ENCODE measurements at regions of chr5 and their contacts with region 1.

Region 1: GRCh38 chr5:172370648-172371545 is 83.4 kb downstream of the SH3PXD2B start:
- DNase-seq: peak in 1 of 2 experiments; percentile 76
- H3K4me3 ChIP-seq: no peak overlapping the region
- H3K27ac ChIP-seq: no peak overlapping the region
- H3K4me1 ChIP-seq: no peaks in the 10 kb centered on the region
- H3K27me3 ChIP-seq: no peaks in the 10 kb centered on the region
- CTCF ChIP-seq: peak in 2 of 3 experiments; percentile 51 to 69; a peak in 3 of 4 replicates
- EP300 ChIP-seq: no peak
- POLR2A ChIP-seq: no peak
- RAD21 ChIP-seq: peak; percentile 47 to 54

Region 2: GRCh38 chr5:172274921-172275753 is 95.8 kb before region 1 on chr5:
- CTCF ChIA-PET with region 1: no interaction called
- POLR2A ChIA-PET with region 1: no interaction called
- DNase-seq: peak in 1 of 2 experiments; percentile 37
- H3K4me3 ChIP-seq: no peak overlapping the region
- H3K27ac ChIP-seq: no peak overlapping the region
- H3K4me1 ChIP-seq: peaks cover 0 to 3% (median 0%) of the 10 kb centered on the region in 4 experiments; a peak in 2 of 7 replicates
- H3K27me3 ChIP-seq: no peaks in the 10 kb centered on the region
- CTCF ChIP-seq: no peak
- EP300 ChIP-seq: no peak
- POLR2A ChIP-seq: no peak
- RAD21 ChIP-seq: no peak

Region 3: GRCh38 chr5:172334196-172334595 is 36.7 kb before region 1 on chr5:
- CTCF ChIA-PET with region 1: interaction called, 19 read pairs
- POLR2A ChIA-PET with region 1: no interaction called
- DNase-seq: peak; percentile 17 to 64
- H3K4me3 ChIP-seq: no peak overlapping the region
- H3K27ac ChIP-seq: no peak overlapping the region
- H3K4me1 ChIP-seq: no peaks in the 10 kb centered on the region
- H3K27me3 ChIP-seq: no peaks in the 10 kb centered on the region
- CTCF ChIP-seq: peak; percentile 65 to 80 (median 75)
- EP300 ChIP-seq: no peak
- POLR2A ChIP-seq: no peak
- RAD21 ChIP-seq: peak; percentile 35 to 50

Region 4: DNA sequence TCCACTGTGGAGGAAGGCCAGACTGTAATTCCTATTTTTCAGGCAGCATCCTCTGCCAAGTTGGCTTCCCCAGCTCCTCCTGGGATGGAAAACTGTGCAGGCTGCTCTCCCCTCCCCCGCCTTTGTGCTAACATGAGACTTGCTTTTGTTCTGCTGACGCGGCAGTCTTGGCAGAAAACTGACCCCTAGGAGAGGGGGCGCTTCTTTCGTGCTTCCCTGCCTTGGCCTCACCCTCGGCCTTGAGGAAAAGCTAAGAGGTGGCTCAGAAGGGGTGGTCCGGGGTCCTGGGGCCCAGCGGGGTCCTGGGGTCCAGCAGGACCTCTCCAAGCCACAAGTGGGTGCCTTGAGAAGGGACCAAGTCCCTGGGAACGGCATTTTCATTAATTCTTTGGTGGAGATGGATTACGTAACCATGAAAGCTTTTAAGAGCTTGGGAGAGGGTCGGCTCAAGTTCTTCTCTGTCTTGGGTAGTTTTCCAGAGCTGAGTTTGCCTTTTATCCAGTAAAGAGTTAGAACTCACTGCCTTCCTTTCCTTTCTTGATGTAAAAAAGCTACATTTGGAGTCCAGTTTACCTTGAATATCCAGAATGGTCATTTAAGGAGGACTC is 32.4 kb after region 1 on chr5:
- CTCF ChIA-PET with region 1: interaction called, 10 read pairs
- POLR2A ChIA-PET with region 1: no interaction called
- DNase-seq: peak in 1 of 2 experiments; percentile 61
- H3K4me3 ChIP-seq: no peak overlapping the region; a peak in 1 of 8 replicates
- H3K27ac ChIP-seq: peak overlapping the region; percentile 78
- H3K4me1 ChIP-seq: peaks cover 7 to 14% (median 13%) of the 10 kb centered on the region in 4 experiments
- H3K27me3 ChIP-seq: no peaks in the 10 kb centered on the region
- CTCF ChIP-seq: no peak
- EP300 ChIP-seq: no peak
- POLR2A ChIP-seq: no peak
- RAD21 ChIP-seq: no peak

Measured in H1 (cell line).